A673 (cell line): ENCODE measurements at regions of chr17 and their contacts with region 1.

Region 1: GRCh38 chr17:37220607-37220953 is 155.2 kb upstream of the C17orf78 start:
- DNase-seq: peak; percentile 21
- H3K4me3 ChIP-seq: no peak overlapping the region
- H3K27ac ChIP-seq: no peak overlapping the region
- H3K4me1 ChIP-seq: no peaks in the 10 kb centered on the region
- H3K27me3 ChIP-seq: no peaks in the 10 kb centered on the region
- CTCF ChIP-seq: peak; percentile 49; the same call in 1 of the 2 replicates

Region 2: GRCh38 chr17:36629252-36629847 is 591.2 kb before region 1 on chr17:
- CTCF ChIA-PET with region 1: no interaction called
- POLR2A ChIA-PET with region 1: no interaction called
- intact Hi-C with region 1: loop called (anchors 2 kb)
- DNase-seq: peak; percentile 48
- H3K4me3 ChIP-seq: no peak overlapping the region
- H3K27ac ChIP-seq: no peak overlapping the region
- H3K4me1 ChIP-seq: no peaks in the 10 kb centered on the region
- H3K27me3 ChIP-seq: no peaks in the 10 kb centered on the region
- CTCF ChIP-seq: peak; percentile 77

Region 3: GRCh38 chr17:37174205-37174604 is 46.4 kb before region 1 on chr17:
- CTCF ChIA-PET with region 1: no interaction called
- POLR2A ChIA-PET with region 1: no interaction called
- intact Hi-C with region 1: no loop called
- DNase-seq: no peak
- H3K4me3 ChIP-seq: no peak overlapping the region
- H3K27ac ChIP-seq: no peak overlapping the region
- H3K4me1 ChIP-seq: no peaks in the 10 kb centered on the region
- H3K27me3 ChIP-seq: no peaks in the 10 kb centered on the region
- CTCF ChIP-seq: no peak

Region 4: DNA sequence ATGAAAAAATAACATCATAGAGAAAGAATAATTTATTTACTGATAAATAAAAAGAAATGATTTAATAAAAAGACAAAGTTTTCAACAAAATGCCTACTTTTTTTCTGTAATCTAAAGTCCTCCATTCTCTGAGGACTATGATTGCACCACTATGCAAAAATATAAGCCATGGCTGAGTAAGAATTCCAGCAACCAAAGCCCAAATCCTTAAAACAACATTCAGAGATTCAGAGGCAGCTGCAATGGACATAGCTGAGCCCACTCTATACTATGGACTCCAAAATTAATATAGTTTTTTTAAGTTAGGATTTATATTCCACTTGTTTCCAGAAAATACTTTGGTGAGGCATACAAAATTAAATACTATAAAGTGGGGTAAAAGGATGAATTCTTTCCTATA is 14.3 kb before region 1 on chr17:
- CTCF ChIA-PET with region 1: no interaction called
- POLR2A ChIA-PET with region 1: no interaction called
- intact Hi-C with region 1: no loop called
- DNase-seq: no peak
- H3K4me3 ChIP-seq: no peak overlapping the region
- H3K27ac ChIP-seq: no peak overlapping the region
- H3K4me1 ChIP-seq: no peaks in the 10 kb centered on the region
- H3K27me3 ChIP-seq: no peaks in the 10 kb centered on the region
- CTCF ChIP-seq: no peak

Region 5: DNA sequence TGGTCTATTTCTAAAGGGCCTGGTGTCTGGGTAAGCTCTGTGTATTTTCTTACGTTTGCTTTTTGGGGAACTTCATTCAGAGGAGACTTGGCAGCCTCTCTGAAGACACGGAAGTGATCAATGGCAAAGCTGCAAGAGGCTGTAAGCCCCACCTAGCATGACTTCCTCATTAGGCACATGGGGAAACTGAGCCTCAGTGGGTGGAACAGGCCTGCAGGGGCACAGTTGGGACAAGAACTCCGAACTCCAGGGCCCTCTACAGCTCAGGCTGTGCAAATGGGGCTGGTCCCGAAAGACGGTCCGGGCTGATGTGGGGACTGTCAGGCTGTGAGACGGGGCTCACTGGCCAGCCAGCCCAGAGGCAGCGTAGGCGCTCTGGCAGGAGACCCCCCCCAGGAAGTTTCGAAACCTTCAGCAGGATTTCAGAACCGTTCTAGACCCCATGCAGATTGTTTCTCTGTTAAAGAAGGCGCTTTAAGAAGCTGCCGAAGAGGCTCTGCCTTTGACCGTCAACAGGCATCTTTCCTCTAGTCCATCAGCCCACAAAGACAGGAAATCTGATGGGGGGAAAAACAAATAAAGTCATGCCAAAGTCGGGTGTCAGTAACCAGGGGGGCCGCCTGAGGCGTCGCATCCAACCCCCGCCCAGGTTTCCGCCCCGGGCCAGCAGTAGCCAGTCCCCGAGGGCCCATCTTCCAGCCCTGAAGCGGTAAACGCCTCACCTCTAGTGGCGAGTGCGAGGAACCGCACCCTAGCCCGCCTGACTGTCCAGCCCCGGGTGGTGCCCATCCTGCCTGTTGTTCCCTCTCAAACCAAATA is 623.8 kb after region 1 on chr17:
- CTCF ChIA-PET with region 1: interaction called, 11 read pairs
- POLR2A ChIA-PET with region 1: no interaction called
- intact Hi-C with region 1: no loop called
- DNase-seq: peak; percentile 3
- H3K4me3 ChIP-seq: no peak overlapping the region
- H3K27ac ChIP-seq: no peak overlapping the region
- H3K4me1 ChIP-seq: no peaks in the 10 kb centered on the region
- H3K27me3 ChIP-seq: no peaks in the 10 kb centered on the region
- CTCF ChIP-seq: peak; percentile 43